ENCODE measurements at regions of chr20 and their contacts with region 1.

Region 1: DNA sequence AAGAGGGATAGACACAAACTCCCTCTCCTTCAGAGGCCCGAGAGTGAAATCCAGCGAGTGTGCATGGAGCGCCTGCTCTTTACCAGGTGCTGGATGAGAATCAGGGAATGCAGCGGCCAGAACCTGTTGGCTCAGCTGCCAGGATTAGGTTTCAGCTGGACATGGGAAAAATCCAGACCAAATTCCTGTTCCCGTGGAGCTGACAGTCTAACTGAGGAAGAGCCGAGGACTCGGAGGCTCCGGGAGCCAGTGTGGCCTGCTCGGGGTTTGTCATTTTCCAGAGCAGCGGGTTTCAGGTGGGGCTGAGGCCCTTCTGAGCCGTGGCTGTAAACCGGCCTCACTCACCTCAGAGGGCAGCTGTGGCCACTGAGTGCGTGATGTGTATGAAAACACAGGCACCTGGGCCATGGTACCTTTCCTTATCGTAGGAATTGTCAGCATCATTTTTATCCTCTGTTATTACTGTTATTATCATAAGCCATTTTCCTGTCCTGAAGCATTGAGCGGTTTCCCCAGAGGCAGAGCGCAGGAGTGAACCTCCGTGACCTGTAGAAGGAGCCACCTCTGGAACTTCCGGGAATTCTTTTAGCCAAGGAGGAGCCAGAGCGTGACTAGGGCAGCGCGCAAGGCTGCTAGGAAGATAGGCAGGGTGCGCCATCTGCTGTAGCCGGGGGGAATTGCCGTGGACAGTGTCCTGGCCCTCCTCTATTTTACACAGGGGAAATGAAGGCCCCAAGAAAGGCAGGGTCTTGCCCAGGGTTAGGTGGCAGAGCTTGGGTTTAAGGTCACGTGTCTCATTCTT is 27.3 kb downstream of the PKIG start:
- DNase-seq: peak; percentile 91 to 97 (median 95)
- H3K4me3 ChIP-seq: peak overlapping the region in 1 of 4 donors; percentile 15
- H3K27ac ChIP-seq: peak overlapping the region in 4 of 5 donors; percentile 49 to 90 (median 78)
- H3K4me1 ChIP-seq: peaks cover 3 to 35% of the 10 kb centered on the region in 2 donors
- H3K27me3 ChIP-seq: no peaks in the 10 kb centered on the region
- CTCF ChIP-seq: peak; percentile 94 to 99 (median 99)
- POLR2A ChIP-seq: peak in 1 of 2 donors; percentile 39

Region 2: DNA sequence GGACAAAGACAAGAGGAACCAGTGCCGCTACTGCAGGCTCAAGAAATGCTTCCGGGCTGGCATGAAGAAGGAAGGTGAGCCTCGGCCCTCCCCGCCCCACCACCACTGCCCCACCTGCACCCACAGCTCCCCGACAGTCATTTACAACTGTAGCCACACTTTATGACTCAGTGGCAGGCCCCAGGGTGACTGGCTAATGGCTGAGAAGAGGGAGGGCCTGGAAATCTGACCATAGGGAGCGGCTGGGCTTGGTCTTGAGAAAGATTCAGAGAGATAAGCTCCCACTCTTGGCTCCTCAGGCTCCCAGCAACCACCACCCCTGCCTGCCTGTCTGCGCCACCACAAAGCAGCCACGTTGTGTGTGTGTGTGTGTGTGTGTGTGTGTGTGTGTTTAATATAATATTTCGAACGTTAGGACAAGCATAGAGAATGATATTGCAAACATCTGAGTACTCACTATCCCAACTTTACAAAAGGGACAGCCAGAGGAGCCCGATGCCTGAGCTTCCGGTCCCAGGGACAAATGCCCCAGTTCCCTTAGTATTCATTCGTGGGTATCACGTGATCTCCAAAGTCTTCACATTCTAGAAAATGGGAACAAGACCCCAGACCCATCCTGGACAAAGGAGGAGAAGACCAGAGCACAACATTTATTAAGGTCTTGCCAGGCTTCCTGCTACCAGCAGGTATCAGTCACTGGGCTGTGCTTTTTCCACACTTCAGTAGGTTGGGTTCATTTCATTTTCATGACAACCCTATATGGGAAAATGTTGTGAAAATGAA is 202.1 kb before region 1 on chr20:
- intact Hi-C with region 1: loop called in 1 of 2 experiments (anchors 10 kb)
- DNase-seq: peak in 6 of 7 donors; percentile 69 to 86 (median 76)
- H3K4me3 ChIP-seq: no peak overlapping the region
- H3K27ac ChIP-seq: no peak overlapping the region
- H3K4me1 ChIP-seq: peaks cover 0 to 6% of the 10 kb centered on the region in 2 donors
- H3K27me3 ChIP-seq: no peaks in the 10 kb centered on the region
- CTCF ChIP-seq: no peak
- POLR2A ChIP-seq: peak in 1 of 2 donors; percentile 33

Region 3: GRCh38 chr20:44431502-44432234 is 178.0 kb before region 1 on chr20:
- intact Hi-C with region 1: no loop called
- DNase-seq: no peak
- H3K4me3 ChIP-seq: no peak overlapping the region
- H3K27ac ChIP-seq: no peak overlapping the region
- H3K4me1 ChIP-seq: peaks cover 0 to 5% of the 10 kb centered on the region in 2 donors
- H3K27me3 ChIP-seq: no peaks in the 10 kb centered on the region
- CTCF ChIP-seq: no peak
- POLR2A ChIP-seq: no peak

Region 4: GRCh38 chr20:44532259-44532980 is 77.3 kb before region 1 on chr20:
- intact Hi-C with region 1: loop called (anchors 5 to 10 kb)
- DNase-seq: peak in 2 of 7 donors; percentile 39 to 73
- H3K4me3 ChIP-seq: peak overlapping the region in 3 of 4 donors; percentile 48 to 79 (median 78)
- H3K27ac ChIP-seq: peak overlapping the region in 3 of 5 donors; percentile 72 to 85 (median 79)
- H3K4me1 ChIP-seq: peaks cover 5 to 30% of the 10 kb centered on the region in 2 donors
- H3K27me3 ChIP-seq: no peaks in the 10 kb centered on the region
- CTCF ChIP-seq: no peak
- POLR2A ChIP-seq: no peak

Measured in adrenal gland (tissue), 19 donors.